ENCODE measurements at regions of chr15 and their contacts with region 1.

Region 1: GRCh38 chr15:59997070-59997701 is 6.9 kb upstream of the FOXB1 start:
- DNase-seq: peak in 1 of 2 experiments; percentile 45
- H3K4me3 ChIP-seq: no peak overlapping the region
- H3K27ac ChIP-seq: no peak overlapping the region
- H3K4me1 ChIP-seq: no peaks in the 10 kb centered on the region
- H3K27me3 ChIP-seq: no peaks in the 10 kb centered on the region
- CTCF ChIP-seq: no peak

Region 2: DNA sequence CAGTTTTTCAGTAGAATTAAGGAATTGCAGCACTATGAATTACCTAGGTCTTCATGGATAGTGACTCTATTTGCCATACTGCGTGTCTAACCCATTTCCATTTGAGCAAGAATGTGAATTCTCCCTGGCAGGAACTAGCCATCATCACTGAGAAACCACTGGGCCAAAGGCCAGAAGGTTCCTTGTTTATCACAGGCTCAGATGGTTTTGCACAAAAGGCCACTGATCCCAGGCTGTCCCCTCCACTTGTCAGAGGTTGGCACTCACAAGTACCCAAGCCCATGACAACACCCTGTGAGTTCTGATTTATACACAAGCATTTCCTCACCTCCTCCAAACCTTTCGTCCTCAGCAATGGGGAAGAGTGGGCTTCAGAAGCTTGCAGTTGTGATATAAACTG is 138.8 kb after region 1 on chr15:
- CTCF ChIA-PET with region 1: interaction called, 16 read pairs
- POLR2A ChIA-PET with region 1: no interaction called
- intact Hi-C with region 1: no loop called
- DNase-seq: no peak
- H3K4me3 ChIP-seq: no peak overlapping the region
- H3K27ac ChIP-seq: no peak overlapping the region
- H3K4me1 ChIP-seq: peaks cover 18% of the 10 kb centered on the region
- H3K27me3 ChIP-seq: no peaks in the 10 kb centered on the region
- CTCF ChIP-seq: no peak

Region 3: DNA sequence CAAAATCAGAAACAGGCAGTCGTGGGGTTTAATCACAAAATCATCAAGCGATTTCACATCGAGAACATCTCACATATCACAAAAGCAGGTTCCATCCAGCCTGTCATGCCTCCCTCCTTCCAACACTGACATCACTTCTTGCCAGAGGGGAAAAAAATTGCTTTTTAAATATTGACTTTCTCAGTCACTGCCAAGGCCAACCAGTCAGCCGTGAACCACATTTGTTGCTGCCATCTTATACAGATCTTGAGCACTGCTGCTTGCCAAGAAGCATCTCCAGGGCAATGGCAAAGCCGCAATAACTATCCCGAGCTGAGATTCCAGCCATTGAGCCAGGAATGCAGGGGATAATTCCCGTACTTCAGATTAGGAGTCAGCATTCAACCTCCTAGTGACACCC is 226.0 kb after region 1 on chr15:
- CTCF ChIA-PET with region 1: no interaction called
- POLR2A ChIA-PET with region 1: no interaction called
- intact Hi-C with region 1: no loop called
- DNase-seq: no peak
- H3K4me3 ChIP-seq: no peak overlapping the region
- H3K27ac ChIP-seq: no peak overlapping the region
- H3K4me1 ChIP-seq: no peaks in the 10 kb centered on the region
- H3K27me3 ChIP-seq: no peaks in the 10 kb centered on the region
- CTCF ChIP-seq: no peak

Region 4: DNA sequence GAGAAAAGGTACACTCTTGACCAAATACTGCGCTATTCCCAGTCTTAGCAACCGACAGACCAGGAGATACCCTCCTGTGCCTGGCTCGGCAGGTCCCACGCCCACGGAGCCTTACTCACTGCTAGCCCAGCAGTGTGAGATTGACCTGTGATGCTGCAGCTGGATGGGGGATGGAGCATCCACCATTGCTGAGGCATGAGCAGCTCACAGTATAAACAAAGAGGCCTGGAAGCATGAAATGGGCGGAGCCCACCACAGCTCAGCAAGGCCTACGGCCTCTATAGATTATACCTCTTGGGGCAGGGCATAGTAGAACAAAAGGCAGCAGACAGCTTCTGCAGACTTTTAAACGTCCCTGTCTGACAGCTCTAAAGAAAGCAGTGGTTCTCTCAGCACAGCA is 240.2 kb after region 1 on chr15:
- CTCF ChIA-PET with region 1: no interaction called
- POLR2A ChIA-PET with region 1: interaction called, 29 read pairs
- intact Hi-C with region 1: no loop called
- DNase-seq: no peak
- H3K4me3 ChIP-seq: no peak overlapping the region
- H3K27ac ChIP-seq: no peak overlapping the region
- H3K4me1 ChIP-seq: no peaks in the 10 kb centered on the region
- H3K27me3 ChIP-seq: no peaks in the 10 kb centered on the region
- CTCF ChIP-seq: no peak

Measured in PC-9 (cell line).